ENCODE measurements at regions of chr5 and their contacts with region 1.

Region 1: DNA sequence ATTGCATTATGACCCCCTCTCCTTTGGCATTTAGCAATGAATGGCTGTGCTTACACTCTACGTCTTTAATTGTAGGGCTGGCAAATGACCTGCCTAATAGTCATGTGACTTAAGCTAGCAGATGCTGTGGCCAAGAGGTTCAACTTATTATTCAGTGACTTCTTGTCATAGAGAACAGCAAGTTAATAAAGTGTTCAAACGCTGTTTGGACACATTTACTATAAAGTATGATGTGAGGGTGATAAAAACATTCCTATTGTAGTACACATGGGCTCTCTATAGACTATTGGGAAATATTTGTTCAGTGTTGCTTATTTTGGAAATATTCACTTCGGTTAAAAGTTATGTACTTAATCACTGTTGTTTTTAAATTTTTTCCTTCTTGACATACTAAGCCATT is 344.9 kb downstream of the NNT start:
- DNase-seq: no peak
- H3K4me3 ChIP-seq: no peak overlapping the region
- H3K27ac ChIP-seq: no peak overlapping the region
- H3K4me1 ChIP-seq: no peaks in the 10 kb centered on the region
- H3K27me3 ChIP-seq: no peaks in the 10 kb centered on the region
- CTCF ChIP-seq: no peak

Region 2: DNA sequence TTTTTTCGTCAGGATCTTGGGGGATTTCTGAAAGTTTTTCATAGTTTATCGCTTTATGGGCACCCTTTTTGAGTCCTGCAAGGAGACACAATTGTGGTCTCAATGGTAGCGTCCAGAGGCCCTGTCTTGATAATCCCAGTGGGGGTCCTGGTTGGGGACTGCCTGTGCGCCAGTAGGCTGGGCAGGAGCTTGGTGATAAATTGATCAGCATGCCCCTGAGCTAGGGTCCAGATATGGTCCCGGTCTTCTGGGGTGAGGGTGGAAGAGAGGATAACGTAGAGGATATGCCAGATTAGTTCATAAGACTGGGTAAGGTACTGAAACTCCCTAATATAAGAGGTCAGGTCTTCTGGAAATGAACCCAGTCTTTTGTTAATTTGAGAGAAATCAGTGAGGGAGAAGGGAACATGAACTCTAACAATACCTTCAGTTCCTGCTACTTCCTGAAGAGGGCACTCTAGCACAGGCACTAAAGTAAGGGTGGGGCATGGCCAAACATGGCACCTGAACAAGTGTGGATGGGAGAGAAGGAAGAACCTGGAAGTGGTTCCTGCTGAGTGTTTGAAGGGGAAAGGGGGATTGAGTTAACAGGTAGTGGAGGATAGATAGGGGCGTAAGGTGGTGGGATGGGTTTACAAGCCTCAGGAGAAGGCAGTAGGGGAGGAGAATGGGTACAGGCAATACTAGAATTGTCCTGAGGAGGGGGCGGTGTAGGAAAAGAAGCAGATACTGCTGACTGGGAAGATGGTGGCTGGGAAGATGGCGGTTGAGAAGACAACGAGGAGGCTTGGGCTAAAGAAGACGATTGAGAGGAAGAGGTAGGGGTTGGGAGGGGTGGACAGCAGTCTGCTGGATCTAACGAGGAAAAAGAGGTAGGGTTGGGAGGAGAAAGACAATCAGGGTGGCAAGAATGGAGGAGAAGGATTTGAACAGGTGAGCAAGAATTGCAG is 874.0 kb before region 1 on chr5:
- intact Hi-C with region 1: no loop called
- DNase-seq: no peak
- H3K4me3 ChIP-seq: no peak overlapping the region
- H3K27ac ChIP-seq: no peak overlapping the region
- H3K4me1 ChIP-seq: peaks cover 0 to 4% of the 10 kb centered on the region in 2 donors
- H3K27me3 ChIP-seq: no peaks in the 10 kb centered on the region
- CTCF ChIP-seq: peak in 2 of 3 experiments; percentile 31 to 36

Region 3: DNA sequence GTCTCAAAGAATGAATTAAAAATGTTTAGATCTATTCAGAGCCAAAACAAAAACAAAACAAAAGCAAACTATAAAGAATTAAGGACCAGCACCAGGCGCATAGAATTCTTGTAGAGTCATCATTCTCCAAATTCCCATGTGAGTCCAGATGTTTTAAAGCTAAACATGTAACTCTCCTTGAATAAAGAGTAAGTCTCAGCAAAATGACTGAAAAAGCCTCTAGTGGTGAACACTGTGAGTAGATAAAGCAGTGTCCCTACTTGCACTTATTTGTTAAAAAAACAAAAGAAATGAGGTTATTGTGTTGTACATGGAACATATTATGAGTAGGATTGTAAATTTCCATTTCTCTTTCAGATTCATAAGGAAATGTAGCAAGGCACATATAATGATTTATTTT is 300.9 kb before region 1 on chr5:
- intact Hi-C with region 1: loop called (anchors 10 kb)
- DNase-seq: no peak
- H3K4me3 ChIP-seq: no peak overlapping the region
- H3K27ac ChIP-seq: no peak overlapping the region
- H3K4me1 ChIP-seq: peaks cover 0 to 17% of the 10 kb centered on the region in 2 donors
- H3K27me3 ChIP-seq: no peaks in the 10 kb centered on the region
- CTCF ChIP-seq: peak in 1 of 3 experiments; percentile 6

Region 4: GRCh38 chr5:43729846-43730478 is 217.9 kb before region 1 on chr5:
- intact Hi-C with region 1: no loop called
- DNase-seq: no peak
- H3K4me3 ChIP-seq: no peak overlapping the region
- H3K27ac ChIP-seq: no peak overlapping the region
- H3K4me1 ChIP-seq: no peaks in the 10 kb centered on the region
- H3K27me3 ChIP-seq: no peaks in the 10 kb centered on the region
- CTCF ChIP-seq: peak in 2 of 3 experiments; percentile 60 to 63

Region 5: GRCh38 chr5:43815504-43815903 is 132.4 kb before region 1 on chr5:
- intact Hi-C with region 1: no loop called
- DNase-seq: no peak
- H3K4me3 ChIP-seq: no peak overlapping the region
- H3K27ac ChIP-seq: no peak overlapping the region
- H3K4me1 ChIP-seq: no peaks in the 10 kb centered on the region
- H3K27me3 ChIP-seq: no peaks in the 10 kb centered on the region
- CTCF ChIP-seq: no peak

Region 6: DNA sequence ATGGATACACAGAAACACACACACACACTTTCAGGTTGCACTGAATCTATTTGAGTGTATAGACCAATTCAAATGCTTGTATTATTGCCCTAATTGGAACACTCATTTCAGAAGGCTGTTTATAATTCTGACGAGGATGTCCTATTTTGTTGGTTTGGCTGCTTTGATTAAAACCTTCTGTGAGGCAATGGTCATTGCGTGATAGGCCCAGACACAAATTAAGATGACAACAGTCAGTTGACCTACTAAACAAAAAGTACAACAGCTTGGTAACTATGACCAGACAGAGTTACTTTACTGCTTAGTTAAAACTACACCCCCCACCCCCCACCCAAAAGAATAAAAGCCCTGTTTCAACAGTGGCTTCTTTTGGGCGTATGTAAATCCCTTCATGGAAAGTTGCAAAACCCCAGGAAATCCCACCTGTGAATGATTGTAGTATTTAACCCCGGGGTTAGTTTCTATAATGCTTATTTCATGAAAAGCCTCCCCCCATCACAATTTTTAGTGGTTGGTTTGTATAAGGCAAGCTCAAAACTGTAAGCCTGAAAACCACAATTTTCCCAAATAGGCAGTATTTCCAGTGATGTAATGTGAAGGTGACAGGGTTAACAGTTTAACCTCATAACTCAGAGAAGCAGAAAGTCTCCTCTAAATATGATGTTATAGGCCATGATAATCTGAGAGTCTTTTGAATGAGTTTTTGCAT is 100.6 kb after region 1 on chr5:
- intact Hi-C with region 1: no loop called
- DNase-seq: no peak
- H3K4me3 ChIP-seq: no peak overlapping the region
- H3K27ac ChIP-seq: no peak overlapping the region
- H3K4me1 ChIP-seq: no peaks in the 10 kb centered on the region
- H3K27me3 ChIP-seq: no peaks in the 10 kb centered on the region
- CTCF ChIP-seq: no peak

Measured in ascending aorta (tissue), 2 donors.